Activated T-helper 1 cell treated with anti-CD3 and anti-CD28 coated beads, Interleukin-12 subunit alpha, Interleukin-12 subunit beta, Interleukin-2, Interleukin-4 antibody, amounts not matched to agents 30 ng/mL and 10 ng/mL and 1 ng/mL, durations not matched to agents 14 hours and 24 hours and 36 hours (primary cell): ENCODE measurements at regions of chr4 and their contacts with region 1.

Region 1: DNA sequence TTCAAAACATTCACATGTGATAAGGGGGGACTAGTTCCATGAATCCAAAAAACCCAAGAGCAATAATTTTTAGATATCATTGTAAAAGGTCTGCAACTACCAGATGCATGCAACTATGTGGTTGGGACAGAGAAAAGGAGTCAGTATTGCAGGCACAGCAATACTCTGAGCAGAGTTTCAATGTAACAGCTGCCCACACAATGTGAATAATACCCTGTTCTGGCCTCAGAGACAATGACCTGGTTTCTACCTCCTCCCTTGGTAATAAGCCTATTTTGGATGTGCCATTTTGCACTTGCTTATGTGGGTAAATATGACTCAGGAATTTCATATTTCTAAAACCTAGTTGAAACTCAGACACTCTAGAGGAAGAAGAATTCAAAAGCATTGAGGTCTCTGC is 194.8 kb upstream of the RASGEF1B start:
- DNase-seq: no peak
- H3K4me3 Mint-ChIP-seq: no peak overlapping the region
- H3K27ac Mint-ChIP-seq: no peak overlapping the region
- H3K4me1 Mint-ChIP-seq: peaks cover 10% of the 10 kb centered on the region
- H3K27me3 Mint-ChIP-seq: no peaks in the 10 kb centered on the region

Region 2: DNA sequence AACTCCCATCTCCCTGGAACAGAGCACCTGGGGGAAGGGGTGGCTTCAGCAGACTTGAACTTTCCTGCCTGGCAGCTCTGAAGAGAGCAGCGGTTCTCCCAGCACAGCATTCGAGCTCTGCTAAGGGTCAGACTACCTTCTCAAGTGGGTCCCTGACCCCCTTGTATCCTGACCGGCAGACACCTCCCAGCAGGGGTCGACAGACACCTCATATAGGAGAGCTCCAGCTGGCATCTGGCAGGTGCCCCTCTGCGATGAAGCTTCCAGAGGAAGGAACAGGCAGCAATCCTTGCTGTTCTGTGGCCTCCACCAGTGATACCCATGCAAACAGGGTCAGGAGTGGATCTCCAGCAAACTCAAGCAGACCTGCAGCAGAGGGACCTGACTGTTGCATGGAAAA is 49.3 kb after region 1 on chr4:
- intact Hi-C with region 1: loop called (anchors 2 kb)
- DNase-seq: no peak
- H3K4me3 Mint-ChIP-seq: no peak overlapping the region
- H3K27ac Mint-ChIP-seq: no peak overlapping the region
- H3K4me1 Mint-ChIP-seq: no peaks in the 10 kb centered on the region
- H3K27me3 Mint-ChIP-seq: peaks cover 9% of the 10 kb centered on the region